Caco-2 (cell line): ENCODE measurements at regions of chr15 and their contacts with region 1.

Region 1: DNA sequence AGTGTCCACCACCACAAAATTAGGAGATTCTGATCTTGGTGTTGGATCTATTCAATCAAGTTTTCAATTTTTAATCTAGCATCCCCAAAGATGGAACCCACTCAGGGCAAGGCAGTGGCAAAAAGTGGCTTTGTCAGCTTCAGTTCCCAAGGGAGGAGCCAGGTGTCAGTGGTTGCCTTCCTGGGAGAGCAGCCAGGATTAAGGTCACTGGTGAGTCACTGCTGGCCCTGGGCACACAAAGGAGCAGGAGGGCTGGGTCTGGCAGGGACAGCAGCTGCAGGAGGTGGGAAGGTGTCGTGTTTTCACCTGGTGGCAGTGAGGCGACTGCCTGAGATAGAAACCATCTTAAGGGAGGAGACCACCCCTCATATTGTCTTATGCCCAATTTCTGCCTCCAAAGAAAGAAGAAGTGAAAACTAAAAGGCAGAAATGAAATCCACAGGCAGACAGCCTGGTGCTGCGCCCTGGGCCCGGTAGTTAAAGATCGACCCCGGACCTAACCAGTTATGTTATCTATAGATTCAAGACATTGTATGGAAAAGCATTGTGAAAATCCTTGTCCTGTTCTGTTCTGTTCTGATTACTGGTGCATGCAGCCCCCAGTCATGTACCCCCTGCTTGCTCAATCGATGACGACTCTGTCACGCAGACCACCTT is 5.9 kb upstream of the KLHL25 start:
- DNase-seq: peak; percentile 80 to 84
- H3K4me3 ChIP-seq: no peak overlapping the region
- H3K4me3 Mint-ChIP-seq: peak overlapping the region; percentile 20
- H3K27ac Mint-ChIP-seq: peak overlapping the region; percentile 78
- H3K4me1 ChIP-seq: peaks cover 21% of the 10 kb centered on the region
- H3K4me1 Mint-ChIP-seq: peaks cover 17% of the 10 kb centered on the region
- H3K27me3 ChIP-seq: no peaks in the 10 kb centered on the region
- H3K27me3 Mint-ChIP-seq: no peaks in the 10 kb centered on the region
- CTCF ChIP-seq: peak; percentile 27 to 75

Region 2: GRCh38 chr15:85831415-85832113 is 31.0 kb after region 1 on chr15:
- CTCF ChIA-PET with region 1: interaction called, 3 read pairs
- POLR2A ChIA-PET with region 1: no interaction called
- intact Hi-C with region 1: loop called (anchors 1 kb)
- DNase-seq: peak; percentile 58
- H3K4me3 ChIP-seq: no peak overlapping the region
- H3K4me3 Mint-ChIP-seq: no peak overlapping the region
- H3K27ac Mint-ChIP-seq: no peak overlapping the region
- H3K4me1 ChIP-seq: peaks cover 7% of the 10 kb centered on the region; the same call in 1 of the 2 replicates
- H3K4me1 Mint-ChIP-seq: peaks cover 8% of the 10 kb centered on the region
- H3K27me3 ChIP-seq: no peaks in the 10 kb centered on the region
- H3K27me3 Mint-ChIP-seq: no peaks in the 10 kb centered on the region
- CTCF ChIP-seq: peak; percentile 38 to 62

Region 3: DNA sequence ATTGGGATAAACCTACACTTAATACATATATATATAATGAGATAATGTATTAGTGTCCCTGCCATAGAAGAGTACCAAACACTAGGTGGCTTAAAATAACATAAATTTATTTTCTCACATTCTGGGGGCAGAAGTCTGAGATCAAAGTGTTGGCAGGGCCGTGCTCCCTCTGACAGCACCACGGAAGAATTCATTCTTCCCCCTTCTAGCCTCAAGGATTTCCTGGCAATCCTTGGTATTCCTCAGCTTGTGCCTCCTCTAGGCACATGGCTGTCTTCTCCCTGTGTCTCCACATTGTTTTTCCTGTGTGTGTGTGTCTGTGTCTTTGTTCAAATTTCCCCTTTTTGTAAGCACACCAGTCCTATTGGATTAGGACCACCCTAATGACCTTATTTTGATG is 163.9 kb after region 1 on chr15:
- CTCF ChIA-PET with region 1: no interaction called
- POLR2A ChIA-PET with region 1: no interaction called
- intact Hi-C with region 1: no loop called
- DNase-seq: no peak
- H3K4me3 ChIP-seq: no peak overlapping the region
- H3K4me3 Mint-ChIP-seq: no peak overlapping the region
- H3K27ac Mint-ChIP-seq: no peak overlapping the region
- H3K4me1 ChIP-seq: no peaks in the 10 kb centered on the region
- H3K4me1 Mint-ChIP-seq: no peaks in the 10 kb centered on the region
- H3K27me3 ChIP-seq: no peaks in the 10 kb centered on the region
- H3K27me3 Mint-ChIP-seq: peaks cover 11% of the 10 kb centered on the region
- CTCF ChIP-seq: no peak